Prostate gland (tissue), 2 donors: ENCODE measurements at regions of chr6 and their contacts with region 1.

Region 1: GRCh38 chr6:168956884-168957730 is 296.5 kb downstream of the THBS2 start:
- DNase-seq: peak; percentile 44
- H3K4me3 ChIP-seq: no peak overlapping the region
- H3K27ac ChIP-seq: no peak overlapping the region
- H3K4me1 ChIP-seq: no peaks in the 10 kb centered on the region
- H3K27me3 ChIP-seq: no peaks in the 10 kb centered on the region
- CTCF ChIP-seq: peak; percentile 19 to 78 (median 72)
- POLR2A ChIP-seq: no peak

Region 2: GRCh38 chr6:168841609-168842278 is 115.4 kb before region 1 on chr6:
- intact Hi-C with region 1: no loop called
- DNase-seq: no peak
- H3K4me3 ChIP-seq: no peak overlapping the region
- H3K27ac ChIP-seq: no peak overlapping the region
- H3K4me1 ChIP-seq: no peaks in the 10 kb centered on the region
- H3K27me3 ChIP-seq: no peaks in the 10 kb centered on the region
- CTCF ChIP-seq: no peak
- POLR2A ChIP-seq: no peak

Region 3: DNA sequence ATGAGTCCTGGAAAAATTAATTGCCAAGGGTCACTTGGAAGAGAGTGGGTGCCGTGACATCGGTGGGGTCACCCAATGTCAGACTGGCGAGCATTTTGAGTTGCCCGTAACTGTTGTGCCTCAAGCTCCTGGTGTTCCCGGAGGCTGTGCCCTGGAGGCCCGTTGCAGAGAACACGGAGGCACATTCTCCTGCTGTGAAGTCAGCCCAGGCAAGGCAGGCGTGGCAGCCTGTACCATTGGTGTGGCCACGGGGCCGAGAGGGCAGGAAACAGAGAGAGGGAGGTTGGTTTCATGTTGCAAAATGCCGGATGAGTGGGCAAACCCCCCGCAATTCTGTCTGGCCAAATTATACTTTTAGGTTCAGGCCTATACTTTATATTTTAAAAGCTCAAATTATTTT is 215.3 kb after region 1 on chr6:
- intact Hi-C with region 1: no loop called
- DNase-seq: no peak
- H3K4me3 ChIP-seq: no peak overlapping the region
- H3K27ac ChIP-seq: no peak overlapping the region
- H3K4me1 ChIP-seq: no peaks in the 10 kb centered on the region
- H3K27me3 ChIP-seq: no peaks in the 10 kb centered on the region
- CTCF ChIP-seq: no peak
- POLR2A ChIP-seq: no peak

Region 4: DNA sequence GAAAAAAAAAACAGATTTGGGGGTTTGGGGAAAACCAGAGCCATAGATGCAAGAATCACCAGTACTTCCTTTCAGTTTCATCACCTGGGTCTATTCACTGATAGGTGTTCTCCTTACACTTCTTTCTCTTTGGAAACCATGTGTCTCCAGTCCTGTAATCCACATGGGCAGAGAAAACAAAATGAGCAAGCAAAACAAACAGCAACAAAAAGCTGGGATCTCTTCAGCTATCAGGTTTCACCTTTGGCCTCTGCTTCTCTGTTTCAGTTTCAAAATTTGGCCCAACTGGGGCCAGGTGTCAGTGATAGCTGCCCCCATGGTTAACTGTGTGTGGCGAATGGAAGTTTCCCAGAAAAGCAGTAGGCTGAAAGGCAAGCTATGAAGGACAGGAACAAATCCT is 516.6 kb after region 1 on chr6:
- intact Hi-C with region 1: no loop called
- DNase-seq: no peak
- H3K4me3 ChIP-seq: no peak overlapping the region
- H3K27ac ChIP-seq: no peak overlapping the region
- H3K4me1 ChIP-seq: no peaks in the 10 kb centered on the region
- H3K27me3 ChIP-seq: no peaks in the 10 kb centered on the region
- CTCF ChIP-seq: no peak
- POLR2A ChIP-seq: no peak

Region 5: DNA sequence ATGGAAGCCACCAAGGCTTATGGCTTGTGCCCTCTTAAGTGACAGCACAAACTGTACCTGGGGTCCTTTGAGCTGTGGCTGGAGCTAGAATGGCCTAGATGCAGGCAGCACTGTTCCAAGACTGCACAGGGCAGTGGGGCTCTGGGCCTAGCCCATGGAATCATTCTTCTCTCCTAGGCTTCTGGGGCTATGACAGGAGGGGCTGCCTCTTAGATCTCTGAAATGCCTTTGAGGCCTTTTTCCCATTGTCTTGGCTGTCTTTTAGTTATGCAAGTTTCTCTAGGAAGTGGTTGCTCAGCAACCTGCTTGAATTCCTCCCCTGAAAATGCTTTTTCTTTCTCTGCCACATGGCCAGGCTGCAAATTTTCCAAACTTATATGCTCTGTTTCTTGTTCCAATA is 561.3 kb after region 1 on chr6:
- intact Hi-C with region 1: loop called (anchors 5 kb)
- DNase-seq: no peak
- H3K4me3 ChIP-seq: no peak overlapping the region
- H3K27ac ChIP-seq: no peak overlapping the region
- H3K4me1 ChIP-seq: no peaks in the 10 kb centered on the region
- H3K27me3 ChIP-seq: no peaks in the 10 kb centered on the region
- CTCF ChIP-seq: no peak
- POLR2A ChIP-seq: no peak

Region 6: GRCh38 chr6:169654598-169655391 is 697.7 kb after region 1 on chr6:
- intact Hi-C with region 1: loop called (anchors 10 kb)
- DNase-seq: peak; percentile 65
- H3K4me3 ChIP-seq: peak overlapping the region; percentile 26 to 36
- H3K27ac ChIP-seq: peak overlapping the region; percentile 50 to 60
- H3K4me1 ChIP-seq: no peaks in the 10 kb centered on the region
- H3K27me3 ChIP-seq: no peaks in the 10 kb centered on the region
- CTCF ChIP-seq: peak in 2 of 4 experiments; percentile 19 to 41
- POLR2A ChIP-seq: peak; percentile 19